ENCODE measurements at regions of chr16 and their contacts with region 1.

Region 1: DNA sequence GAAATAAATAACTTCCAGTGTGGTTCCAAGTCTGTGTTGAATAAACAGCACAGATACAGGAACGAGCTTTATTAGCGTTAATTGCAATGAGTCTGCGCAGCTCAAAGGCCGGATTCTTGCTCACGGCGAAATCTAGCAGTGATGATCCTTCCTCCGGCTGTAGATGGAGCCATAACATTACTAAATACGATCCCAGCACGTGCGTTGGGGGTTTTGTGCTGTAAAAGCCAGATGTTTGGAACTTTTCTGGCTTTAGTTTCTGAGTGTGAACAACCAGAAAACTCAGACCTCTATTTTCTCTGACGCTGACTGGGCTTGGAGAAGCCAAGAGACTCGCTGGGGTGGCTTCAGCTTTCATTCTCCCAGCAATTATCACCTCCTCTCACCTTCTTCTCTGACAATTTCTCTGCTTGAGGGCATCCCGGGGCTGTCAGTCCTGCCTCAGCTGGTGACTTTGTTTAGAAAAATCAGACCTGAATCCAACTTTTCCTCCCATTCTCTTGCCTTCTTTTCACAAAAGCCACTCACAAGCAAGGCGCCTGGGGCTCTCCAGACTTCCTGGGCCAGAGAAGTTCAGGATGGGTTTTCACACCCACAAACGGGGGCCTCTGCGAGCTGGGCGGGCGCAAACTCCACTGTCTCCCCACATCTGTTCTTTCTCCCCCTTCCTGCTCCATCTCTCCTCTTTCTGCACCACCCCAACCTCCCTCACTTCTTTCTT is 47.1 kb upstream of the AKTIP start:
- DNase-seq: peak; percentile 81 to 86
- H3K4me3 ChIP-seq: no peak overlapping the region
- H3K4me1 ChIP-seq: peaks cover 2% of the 10 kb centered on the region; the same call in 1 of the 2 replicates
- H3K27me3 ChIP-seq: peaks cover 17% of the 10 kb centered on the region

Region 2: DNA sequence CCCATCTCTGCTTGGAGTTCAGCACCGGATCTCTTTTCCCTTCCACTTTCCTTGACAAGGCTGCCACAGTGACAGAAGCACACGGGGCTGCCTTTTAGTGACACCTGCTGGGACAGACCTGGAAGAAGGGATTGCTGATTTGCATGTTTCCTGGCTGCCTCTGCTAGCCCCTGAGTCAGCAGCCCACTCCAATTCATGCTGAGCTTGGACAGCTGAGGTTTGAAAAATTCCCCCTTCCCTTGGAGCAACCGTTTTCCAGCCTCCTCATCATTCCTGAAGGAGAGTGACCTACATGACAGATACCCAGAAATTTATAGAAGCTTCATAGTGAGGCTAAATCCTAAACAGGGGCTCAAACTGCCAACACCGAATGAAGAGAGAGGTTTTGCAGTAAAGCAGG is 134.6 kb before region 1 on chr16:
- in situ Hi-C with region 1: no loop called
- DNase-seq: no peak
- H3K4me3 ChIP-seq: no peak overlapping the region
- H3K4me1 ChIP-seq: no peaks in the 10 kb centered on the region
- H3K27me3 ChIP-seq: no peaks in the 10 kb centered on the region

Region 3: DNA sequence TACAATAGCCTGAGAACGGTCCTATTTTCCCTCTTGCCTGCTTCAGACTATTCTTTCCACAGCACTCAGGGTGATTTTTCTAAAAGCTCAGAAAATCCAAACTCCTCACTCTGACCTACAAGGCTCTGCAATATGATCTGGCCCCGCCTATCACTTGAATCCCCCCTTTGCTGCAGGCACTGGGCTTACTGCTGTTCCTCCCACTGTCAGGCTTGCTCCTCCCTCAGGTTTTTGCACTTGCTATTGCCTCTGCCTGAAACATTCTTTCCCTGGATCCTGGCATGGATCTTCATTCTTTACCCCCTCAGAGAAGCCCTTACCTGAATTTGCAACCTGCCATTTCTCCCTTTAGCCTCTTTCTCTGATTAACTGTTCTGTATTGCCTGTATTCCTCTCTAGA is 101.2 kb after region 1 on chr16:
- in situ Hi-C with region 1: no loop called
- DNase-seq: peak in 1 of 2 experiments; percentile 21
- H3K4me3 ChIP-seq: no peak overlapping the region
- H3K4me1 ChIP-seq: peaks cover 8% of the 10 kb centered on the region
- H3K27me3 ChIP-seq: no peaks in the 10 kb centered on the region

Region 4: DNA sequence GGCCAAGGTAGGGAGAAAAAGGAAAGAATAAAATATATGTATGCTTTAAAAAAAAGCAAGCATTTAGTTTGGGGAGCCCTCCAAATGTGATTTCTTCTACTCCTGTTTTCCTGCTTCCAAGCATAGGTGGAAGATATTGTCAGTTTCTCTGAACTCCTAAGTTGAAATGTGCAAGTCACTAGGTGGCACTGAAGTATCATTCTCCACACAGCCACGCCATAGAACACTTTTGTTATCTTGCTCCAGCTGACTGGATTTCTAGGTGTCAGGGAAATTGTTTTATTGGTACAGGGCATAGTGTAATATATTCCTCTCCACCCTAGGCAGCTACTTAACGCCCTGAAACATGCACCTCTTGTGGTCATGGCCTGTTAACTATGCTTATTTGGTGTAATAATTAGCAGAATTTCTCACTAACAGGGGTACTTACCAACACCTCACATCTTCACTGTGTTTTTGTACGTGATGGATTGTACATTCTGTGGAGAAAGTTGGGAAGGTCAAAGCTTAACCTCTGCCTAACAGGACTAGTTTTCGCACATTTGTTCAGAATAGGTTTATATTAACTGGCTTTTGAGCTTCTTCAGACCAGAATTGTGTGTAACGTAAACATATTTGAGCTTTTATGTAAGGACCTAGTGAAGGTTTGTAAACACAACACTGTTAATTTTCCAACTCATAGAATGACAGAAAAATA is 223.2 kb after region 1 on chr16:
- in situ Hi-C with region 1: loop called (anchors 10 kb)
- DNase-seq: peak; percentile 60 to 82
- H3K4me3 ChIP-seq: no peak overlapping the region
- H3K4me1 ChIP-seq: peaks cover 39% of the 10 kb centered on the region
- H3K27me3 ChIP-seq: no peaks in the 10 kb centered on the region

Region 5: GRCh38 chr16:53892155-53892554 is 342.0 kb after region 1 on chr16:
- in situ Hi-C with region 1: loop called (anchors 10 kb)
- DNase-seq: peak; percentile 50 to 75
- H3K4me3 ChIP-seq: no peak overlapping the region
- H3K4me1 ChIP-seq: peaks cover 12% of the 10 kb centered on the region
- H3K27me3 ChIP-seq: no peaks in the 10 kb centered on the region

Region 6: GRCh38 chr16:54208237-54208636 is 658.1 kb after region 1 on chr16:
- in situ Hi-C with region 1: no loop called
- DNase-seq: no peak
- H3K4me3 ChIP-seq: no peak overlapping the region
- H3K4me1 ChIP-seq: no peaks in the 10 kb centered on the region
- H3K27me3 ChIP-seq: no peaks in the 10 kb centered on the region; the same call in 1 of the 2 replicates

Region 7: DNA sequence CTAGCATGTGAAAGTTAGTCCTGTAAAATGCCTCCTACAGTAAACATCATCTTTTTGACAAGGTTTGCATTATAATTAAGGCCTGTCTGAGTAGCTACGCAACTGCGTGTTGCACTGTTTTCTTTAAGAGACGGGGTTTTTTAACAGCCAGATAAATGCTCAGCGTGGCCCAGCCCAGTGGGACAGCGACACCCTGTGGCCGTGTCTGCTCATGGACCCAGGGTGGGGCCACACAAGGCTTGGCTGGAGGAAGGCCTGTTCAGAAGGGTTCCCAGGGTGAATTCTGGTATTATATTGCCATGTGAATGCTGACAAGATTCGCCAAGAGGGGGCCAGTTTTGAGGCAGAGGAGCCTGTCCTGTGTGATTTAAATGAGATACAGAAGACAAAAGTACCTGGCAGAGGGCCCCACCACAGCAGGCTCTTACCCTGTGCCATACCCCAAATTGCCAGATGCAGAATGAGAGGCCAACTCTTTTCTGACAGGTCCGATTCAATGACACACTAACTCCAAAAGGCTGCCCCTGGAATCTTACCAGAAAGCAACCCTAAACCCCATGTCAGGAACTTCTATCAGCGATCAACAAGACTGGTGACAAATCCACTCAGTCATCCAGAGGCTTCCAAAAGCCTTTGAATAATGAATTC is 1708.0 kb after region 1 on chr16:
- in situ Hi-C with region 1: loop called (anchors 25 kb)
- DNase-seq: peak; percentile 60 to 83
- H3K4me3 ChIP-seq: no peak overlapping the region
- H3K4me1 ChIP-seq: no peaks in the 10 kb centered on the region
- H3K27me3 ChIP-seq: no peaks in the 10 kb centered on the region

Measured in HAP-1 (cell line).